ENCODE measurements at regions of chr1 and their contacts with region 1.

Region 1: DNA sequence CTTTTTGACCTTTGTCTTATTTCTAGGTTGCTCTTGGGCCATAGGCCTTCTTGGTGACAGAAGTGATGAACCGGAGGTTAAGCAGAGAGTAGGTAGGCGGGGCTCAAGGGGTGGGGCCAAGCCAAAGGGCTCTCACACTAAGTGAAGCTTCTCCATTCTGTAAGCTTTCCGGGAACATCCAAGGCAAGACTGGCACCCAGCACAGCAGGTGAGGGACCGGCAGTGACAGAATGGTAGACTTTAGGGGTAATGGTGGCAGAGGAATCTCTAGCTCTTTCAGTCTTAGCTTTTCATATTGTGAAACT is at the start of gene TNFAIP8L2:
- DNase-seq: peak; percentile 77
- ATAC-seq: peak; percentile 88
- H3K4me3 Mint-ChIP-seq: peak within 1 kb of the TSS; percentile 99
- H3K27ac Mint-ChIP-seq: peak within 1 kb of the TSS; percentile 95
- H3K4me1 Mint-ChIP-seq: peaks cover 44% of the 10 kb centered on the region
- H3K27me3 Mint-ChIP-seq: no peaks in the 10 kb centered on the region
- total RNA-seq, gene TNFAIP8L2: 21.2 to 23.7 TPM

Region 2: GRCh38 chr1:150789396-150789795 is 367.1 kb before region 1 on chr1:
- POLR2A ChIA-PET with region 1: no interaction called
- DNase-seq: no peak
- ATAC-seq: no peak
- H3K4me3 Mint-ChIP-seq: no peak overlapping the region
- H3K27ac Mint-ChIP-seq: no peak overlapping the region
- H3K4me1 Mint-ChIP-seq: peaks cover 3% of the 10 kb centered on the region
- H3K27me3 Mint-ChIP-seq: no peaks in the 10 kb centered on the region

Region 3: DNA sequence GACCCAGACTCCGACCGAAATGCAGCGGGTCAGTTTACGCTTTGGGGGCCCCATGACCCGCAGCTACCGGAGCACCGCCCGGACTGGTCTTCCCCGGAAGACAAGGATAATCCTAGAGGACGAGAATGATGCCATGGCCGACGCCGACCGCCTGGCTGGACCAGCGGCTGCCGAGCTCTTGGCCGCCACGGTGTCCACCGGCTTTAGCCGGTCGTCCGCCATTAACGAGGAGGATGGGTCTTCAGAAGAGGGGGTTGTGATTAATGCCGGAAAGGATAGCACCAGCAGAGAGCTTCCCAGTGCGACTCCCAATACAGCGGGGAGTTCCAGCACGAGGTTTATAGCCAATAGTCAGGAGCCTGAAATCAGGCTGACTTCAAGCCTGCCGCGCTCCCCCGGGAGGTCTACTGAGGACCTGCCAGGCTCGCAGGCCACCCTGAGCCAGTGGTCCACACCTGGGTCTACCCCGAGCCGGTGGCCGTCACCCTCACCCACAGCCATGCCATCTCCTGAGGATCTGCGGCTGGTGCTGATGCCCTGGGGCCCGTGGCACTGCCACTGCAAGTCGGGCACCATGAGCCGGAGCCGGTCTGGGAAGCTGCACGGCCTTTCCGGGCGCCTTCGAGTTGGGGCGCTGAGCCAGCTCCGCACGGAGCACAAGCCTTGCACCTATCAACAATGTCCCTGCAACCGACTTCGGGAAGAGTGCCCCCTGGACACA is 108.4 kb before region 1 on chr1:
- POLR2A ChIA-PET with region 1: interaction called, 10 read pairs
- DNase-seq: peak; percentile 74
- ATAC-seq: peak; percentile 86
- H3K4me3 Mint-ChIP-seq: peak overlapping the region; percentile 89
- H3K27ac Mint-ChIP-seq: peak overlapping the region; percentile 85
- H3K4me1 Mint-ChIP-seq: peaks cover 13% of the 10 kb centered on the region
- H3K27me3 Mint-ChIP-seq: no peaks in the 10 kb centered on the region

Region 4: DNA sequence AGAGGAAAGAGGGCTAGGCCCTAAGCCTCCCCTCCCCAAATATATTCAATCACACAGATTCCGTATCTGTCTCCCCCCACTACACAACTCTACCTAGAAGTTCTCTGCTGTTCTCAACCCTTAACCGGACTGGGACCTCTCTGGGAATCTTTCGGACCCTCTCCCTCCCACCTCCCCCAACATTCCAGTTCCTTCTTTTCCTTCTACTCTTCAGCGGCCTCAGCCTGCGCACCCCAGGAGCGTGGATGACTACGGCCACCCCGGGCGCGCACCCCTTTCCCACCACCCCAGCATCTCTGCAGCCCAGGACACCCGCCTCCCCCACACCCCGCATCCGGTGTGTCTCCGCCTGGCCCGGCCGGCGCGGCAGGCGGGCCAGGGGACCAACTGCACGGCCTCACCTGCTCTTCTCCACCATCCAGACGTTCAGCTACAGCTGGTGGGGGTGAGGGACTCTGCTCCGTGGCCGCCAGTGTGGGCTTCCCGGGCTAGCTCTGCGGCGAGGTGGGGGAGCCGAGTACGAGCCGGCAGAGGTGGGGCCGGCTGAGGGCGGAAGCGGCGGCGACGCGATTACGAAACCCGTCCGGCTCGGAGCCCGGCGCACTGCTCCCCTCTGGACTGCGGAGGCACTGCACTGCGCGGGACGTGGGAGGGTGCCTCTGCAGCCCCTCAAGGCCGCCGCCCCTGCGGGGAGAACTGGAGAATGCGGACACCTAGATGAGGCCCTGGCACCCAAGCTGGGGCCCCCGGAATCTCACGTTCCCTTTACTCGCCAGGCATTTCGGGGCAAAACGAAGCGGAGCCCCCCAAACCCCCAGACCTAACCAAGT is 97.2 kb before region 1 on chr1 and contains the start of gene CDC42SE1:
- POLR2A ChIA-PET with region 1: interaction called, 13 read pairs
- DNase-seq: peak; percentile 90
- ATAC-seq: peak; percentile 76
- H3K4me3 Mint-ChIP-seq: peak within 1 kb of the TSS; percentile 92
- H3K27ac Mint-ChIP-seq: peak within 1 kb of the TSS; percentile 96
- H3K4me1 Mint-ChIP-seq: peaks cover 51% of the 10 kb centered on the region
- H3K27me3 Mint-ChIP-seq: no peaks in the 10 kb centered on the region
- total RNA-seq, gene CDC42SE1: 282 to 294 TPM

Region 5: DNA sequence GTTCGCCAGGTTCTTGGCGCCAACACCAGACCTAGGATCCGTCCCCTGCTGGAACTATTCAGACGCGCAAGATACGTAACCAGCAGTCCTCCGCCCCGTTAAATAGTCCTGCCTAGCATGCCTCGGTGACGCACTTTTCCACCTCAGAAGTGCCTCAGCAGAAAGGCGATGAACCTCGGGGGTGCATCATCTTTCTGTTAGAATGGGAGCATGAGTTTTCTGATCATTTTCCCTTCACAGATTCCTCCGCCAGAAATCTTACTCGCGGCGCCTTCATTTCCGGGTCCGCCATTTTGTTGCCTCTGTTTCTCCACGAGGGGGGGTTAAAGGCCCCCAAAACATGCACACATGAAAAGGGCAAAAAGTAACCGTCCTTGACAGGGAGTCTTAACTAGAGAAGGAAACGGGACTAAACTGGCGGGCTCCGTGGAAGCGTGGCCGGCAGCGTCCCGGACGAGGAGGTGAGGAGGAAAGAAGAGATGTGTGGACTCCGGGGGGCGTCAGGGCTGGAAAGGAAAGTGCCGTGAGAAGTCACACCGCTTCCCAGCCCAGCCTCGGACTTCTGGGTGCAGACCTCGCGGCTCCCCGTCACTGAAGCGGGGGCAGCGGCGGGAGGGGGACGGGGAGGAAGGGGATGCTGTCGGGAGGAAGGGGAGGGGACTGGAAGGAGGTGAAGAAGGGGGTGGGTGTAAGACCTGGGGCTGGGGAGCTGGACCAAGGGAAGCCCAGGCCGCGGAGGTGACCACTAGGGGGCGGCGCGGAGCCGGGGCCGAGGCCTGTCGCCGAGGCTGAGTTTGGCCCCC is 85.8 kb before region 1 on chr1 and contains the start of gene GABPB2:
- POLR2A ChIA-PET with region 1: interaction called, 11 read pairs
- DNase-seq: peak; percentile 92
- ATAC-seq: peak; percentile 83
- H3K4me3 Mint-ChIP-seq: peak within 1 kb of the TSS; percentile 97
- H3K27ac Mint-ChIP-seq: peak within 1 kb of the TSS; percentile 99
- H3K4me1 Mint-ChIP-seq: peaks cover 16% of the 10 kb centered on the region
- H3K27me3 Mint-ChIP-seq: no peaks in the 10 kb centered on the region
- total RNA-seq, gene GABPB2: 32.9 to 34.0 TPM

Region 6: GRCh38 chr1:151098126-151098525 is 58.3 kb before region 1 on chr1:
- POLR2A ChIA-PET with region 1: interaction called, 22 read pairs
- DNase-seq: no peak
- ATAC-seq: no peak
- H3K4me3 Mint-ChIP-seq: no peak overlapping the region
- H3K27ac Mint-ChIP-seq: no peak overlapping the region
- H3K4me1 Mint-ChIP-seq: no peaks in the 10 kb centered on the region
- H3K27me3 Mint-ChIP-seq: no peaks in the 10 kb centered on the region

Region 7: DNA sequence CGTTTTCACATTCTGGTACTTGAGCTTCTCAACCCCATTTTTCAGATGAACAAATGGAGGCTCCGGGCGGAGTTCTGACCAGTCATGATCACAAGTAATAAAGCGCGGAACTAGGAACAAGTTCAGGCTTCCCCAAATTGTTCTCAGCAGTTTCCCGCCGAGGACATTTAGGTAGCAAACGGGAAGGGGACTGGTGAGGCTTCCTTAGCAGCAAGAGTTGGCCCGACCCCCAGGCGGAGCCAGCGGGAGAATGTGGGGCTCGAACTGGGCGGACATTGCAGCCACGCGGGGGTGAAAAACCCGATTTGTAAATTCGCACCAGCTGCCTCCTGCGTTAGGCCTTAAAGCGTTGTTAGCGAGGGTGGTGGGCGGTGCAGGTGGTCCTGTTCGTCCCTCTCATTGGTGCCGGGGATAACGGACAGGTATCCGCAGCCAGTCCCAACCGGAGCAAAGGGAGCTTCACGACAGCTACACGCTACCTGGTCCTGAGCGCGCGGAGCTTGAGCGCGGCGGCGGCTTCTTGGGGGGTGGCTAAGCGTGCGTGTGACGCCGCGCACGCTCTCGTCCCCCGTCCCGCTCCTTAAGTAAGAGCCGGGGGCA is 25.4 kb before region 1 on chr1:
- POLR2A ChIA-PET with region 1: interaction called, 11 read pairs
- DNase-seq: peak; percentile 74
- ATAC-seq: peak; percentile 100
- H3K4me3 Mint-ChIP-seq: peak overlapping the region; percentile 72
- H3K27ac Mint-ChIP-seq: peak overlapping the region; percentile 60
- H3K4me1 Mint-ChIP-seq: peaks cover 5% of the 10 kb centered on the region
- H3K27me3 Mint-ChIP-seq: no peaks in the 10 kb centered on the region

Region 8: GRCh38 chr1:151189638-151190445 is 33.4 kb after region 1 on chr1 and contains the start of gene VPS72:
- POLR2A ChIA-PET with region 1: interaction called, 28 read pairs
- DNase-seq: peak; percentile 85
- ATAC-seq: peak; percentile 94
- H3K4me3 Mint-ChIP-seq: peak within 1 kb of the TSS; percentile 97
- H3K27ac Mint-ChIP-seq: peak within 1 kb of the TSS; percentile 98
- H3K4me1 Mint-ChIP-seq: peaks cover 18% of the 10 kb centered on the region
- H3K27me3 Mint-ChIP-seq: peaks cover 15% of the 10 kb centered on the region
- total RNA-seq, gene VPS72: 67.4 to 86.9 TPM